Activated CD8-positive, alpha-beta memory T cell treated with anti-CD3 and anti-CD28 coated beads, Interleukin-2, amount 10 ng/mL, durations not matched to agents 7 days and 5 days (primary cell): ENCODE measurements at regions of chr16 and their contacts with region 1.

Region 1: DNA sequence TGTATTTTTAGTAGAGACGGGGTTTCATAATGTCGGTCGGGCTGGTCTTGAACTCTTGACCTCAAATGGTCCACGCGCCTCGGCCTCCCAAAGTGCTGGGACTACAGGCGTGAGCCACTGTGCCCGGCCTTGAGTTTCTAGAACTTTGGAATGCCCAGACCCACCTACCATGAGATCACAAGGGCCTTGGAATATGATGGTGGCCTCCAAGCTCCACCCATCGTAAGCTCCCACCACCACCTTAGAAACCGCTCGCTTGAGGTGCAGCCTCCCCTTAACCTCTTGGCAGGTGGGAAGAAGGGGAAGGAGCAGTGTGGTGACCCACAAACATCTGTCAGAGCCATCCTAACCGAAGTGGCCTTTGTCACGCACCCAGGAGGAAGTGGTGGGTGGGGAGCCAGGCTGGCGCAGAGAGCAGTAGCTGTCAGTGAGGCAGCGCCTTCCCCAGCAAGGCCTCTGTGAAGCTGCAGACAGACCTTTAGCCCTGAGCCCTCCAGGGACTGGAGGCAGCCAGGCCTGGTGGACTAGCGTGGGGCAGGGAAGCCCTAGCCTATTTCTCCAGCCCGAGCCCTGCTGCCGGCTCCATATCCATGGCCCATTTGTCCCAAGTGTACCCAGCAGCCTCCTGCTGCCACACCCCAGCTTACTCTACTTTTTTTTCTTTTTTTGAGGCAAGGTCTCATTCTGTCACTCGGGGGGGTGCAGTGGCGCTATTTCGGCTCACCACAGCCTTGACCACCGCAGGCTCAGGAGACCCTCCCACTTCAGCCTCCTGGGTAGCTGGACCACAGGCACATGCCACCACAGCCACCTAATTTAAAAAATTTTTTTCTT is 13.1 kb upstream of the SEPHS2 start:
- DNase-seq: peak; percentile 97
- ATAC-seq: peak; percentile 96
- H3K4me3 Mint-ChIP-seq: peak overlapping the region; percentile 53
- H3K27ac Mint-ChIP-seq: peak overlapping the region; percentile 96
- H3K4me1 Mint-ChIP-seq: peaks cover 64% of the 10 kb centered on the region
- H3K27me3 Mint-ChIP-seq: peaks cover 2% of the 10 kb centered on the region

Region 2: DNA sequence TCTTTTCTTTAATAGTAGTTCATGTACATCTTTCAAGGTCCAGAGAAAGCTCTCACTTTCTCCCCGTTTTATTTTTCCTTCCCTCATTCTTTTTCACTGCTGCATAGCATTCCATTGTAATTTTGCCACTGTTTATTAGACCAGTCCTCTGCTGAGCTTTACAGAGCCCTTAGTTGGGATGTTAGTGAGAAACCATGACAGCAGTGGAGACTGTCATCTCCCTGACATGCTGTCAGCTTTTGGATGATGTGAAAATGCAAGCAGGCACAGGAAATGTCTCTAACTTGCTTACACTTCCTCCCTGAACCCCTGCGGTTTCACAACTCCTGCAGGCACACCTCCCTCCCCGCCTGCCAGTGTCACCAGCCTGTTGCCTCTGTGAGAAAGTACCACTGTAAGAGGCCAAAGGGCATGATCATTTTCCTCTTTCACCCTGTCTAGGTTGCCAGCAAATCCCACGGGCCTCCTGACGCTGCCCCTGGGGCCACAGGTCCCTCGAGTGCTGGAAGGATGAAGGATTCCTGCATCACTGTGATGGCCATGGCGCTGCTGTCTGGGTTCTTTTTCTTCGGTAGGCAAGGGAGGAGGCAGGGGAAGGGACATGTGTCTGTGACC is 13.7 kb after region 1 on chr16 and contains the start of gene ITGAL:
- CTCF ChIA-PET with region 1: interaction called, 71 read pairs
- DNase-seq: peak; percentile 95
- ATAC-seq: peak; percentile 77
- H3K4me3 Mint-ChIP-seq: peak within 1 kb of the TSS; percentile 100
- H3K27ac Mint-ChIP-seq: peak within 1 kb of the TSS; percentile 96
- H3K4me1 Mint-ChIP-seq: peaks cover 64% of the 10 kb centered on the region
- H3K27me3 Mint-ChIP-seq: no peaks in the 10 kb centered on the region
- total RNA-seq, gene ITGAL: 566 to 685 TPM